Activated naive CD4-positive, alpha-beta T cell treated with anti-CD3 and anti-CD28 coated beads for 36 hours (primary cell): ENCODE measurements at regions of chr14 and their contacts with region 1.

Region 1: GRCh38 chr14:86038387-86039042 is 508.6 kb downstream of the FLRT2 start:
- DNase-seq: peak; percentile 54
- H3K4me3 Mint-ChIP-seq: no peak overlapping the region
- H3K27ac Mint-ChIP-seq: no peak overlapping the region
- H3K4me1 Mint-ChIP-seq: no peaks in the 10 kb centered on the region
- H3K27me3 Mint-ChIP-seq: no peaks in the 10 kb centered on the region

Region 2: DNA sequence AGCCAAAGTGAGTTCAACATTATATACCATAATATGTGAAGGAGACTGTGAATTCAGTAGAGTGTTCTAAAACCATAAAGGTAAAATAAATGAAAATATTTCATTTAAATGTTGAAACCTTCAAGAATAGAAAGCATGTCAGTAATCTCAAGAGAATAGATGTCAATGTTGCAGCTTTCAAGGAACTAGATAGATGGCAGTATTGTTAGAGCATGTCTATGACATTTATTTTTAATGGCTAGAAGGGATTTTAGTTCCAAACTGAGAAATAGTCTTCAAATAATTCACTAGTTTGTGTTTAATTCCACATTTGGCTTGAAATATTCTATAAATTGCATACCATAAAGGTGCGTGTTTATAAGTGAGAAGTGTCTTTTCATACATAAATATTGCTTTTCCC is 182.1 kb before region 1 on chr14:
- CTCF ChIA-PET with region 1: no interaction called
- intact Hi-C with region 1: loop called (anchors 1 kb)
- DNase-seq: no peak
- H3K4me3 Mint-ChIP-seq: no peak overlapping the region
- H3K27ac Mint-ChIP-seq: no peak overlapping the region
- H3K4me1 Mint-ChIP-seq: no peaks in the 10 kb centered on the region
- H3K27me3 Mint-ChIP-seq: peaks cover 6% of the 10 kb centered on the region

Region 3: DNA sequence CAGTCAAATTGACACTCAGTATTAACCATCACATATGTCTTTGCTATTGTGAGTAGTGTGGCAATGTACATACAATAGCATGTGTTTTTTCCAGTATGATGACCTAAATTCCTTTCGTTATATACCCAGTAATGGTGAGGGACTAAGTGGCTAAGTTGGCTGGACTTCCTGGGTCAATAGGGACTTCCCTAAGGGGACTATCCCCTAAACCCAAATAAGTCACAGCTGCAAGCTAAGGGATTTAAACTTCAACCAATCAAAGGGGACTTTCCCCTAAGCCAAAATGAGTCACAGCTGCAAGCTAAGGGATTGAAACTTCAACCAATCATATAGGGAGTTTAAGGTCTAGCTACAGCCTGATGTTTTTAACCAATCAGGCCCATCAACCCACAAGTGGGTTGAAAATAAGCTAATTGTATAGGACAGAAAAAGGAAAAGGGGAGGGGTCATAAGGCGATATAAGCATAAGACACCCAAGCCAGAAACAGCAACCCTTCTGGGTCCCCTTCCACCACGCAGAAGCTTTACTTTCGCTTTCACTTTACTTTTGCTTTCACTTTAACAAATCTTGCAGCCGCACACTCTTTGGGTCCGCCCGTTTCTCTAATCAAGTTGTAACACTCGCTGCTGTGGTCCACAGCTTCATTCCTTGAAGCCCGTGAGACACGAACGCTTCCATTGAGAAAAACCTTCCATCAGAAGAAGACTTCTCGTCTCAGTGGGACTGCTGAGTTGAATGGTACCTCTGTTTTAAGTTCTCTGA is 104.2 kb before region 1 on chr14:
- CTCF ChIA-PET with region 1: no interaction called
- intact Hi-C with region 1: loop called (anchors 5 kb)
- DNase-seq: peak; percentile 55
- H3K4me3 Mint-ChIP-seq: peak overlapping the region; percentile 80
- H3K27ac Mint-ChIP-seq: peak overlapping the region; percentile 90
- H3K4me1 Mint-ChIP-seq: peaks cover 30% of the 10 kb centered on the region
- H3K27me3 Mint-ChIP-seq: no peaks in the 10 kb centered on the region